RWPE1 (cell line): ENCODE measurements at regions of chr2 and their contacts with region 1.

Region 1: GRCh38 chr2:215311625-215312396 is at the start of gene ATIC:
- DNase-seq: peak; percentile 90
- H3K27ac ChIP-seq: peak within 1 kb of the TSS; percentile 79
- CTCF ChIP-seq: no peak

Region 2: GRCh38 chr2:215137807-215138206 is 174.0 kb before region 1 on chr2:
- CTCF ChIA-PET with region 1: no interaction called
- POLR2A ChIA-PET with region 1: interaction called, 10 read pairs
- DNase-seq: peak; percentile 92
- H3K27ac ChIP-seq: peak overlapping the region; percentile 70
- CTCF ChIP-seq: no peak

Region 3: DNA sequence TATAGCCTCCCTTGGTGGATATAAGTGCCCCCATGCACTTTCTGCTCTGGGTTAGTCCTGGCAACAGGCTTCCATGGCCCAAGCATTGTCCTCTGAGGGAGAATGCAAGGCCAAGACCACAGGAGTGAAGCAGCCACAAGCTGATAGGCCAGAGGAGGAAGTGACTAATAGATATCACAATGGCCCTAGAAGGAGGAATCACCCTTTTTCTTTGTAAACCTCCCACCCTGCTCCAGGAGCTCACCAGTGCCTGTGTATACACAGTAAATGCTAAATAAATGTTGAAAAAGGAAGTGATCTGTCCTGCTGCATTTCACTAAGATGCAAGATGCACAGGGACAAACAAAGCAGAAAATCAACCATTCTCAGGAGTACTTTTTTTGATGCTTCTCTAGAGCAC is 123.7 kb before region 1 on chr2:
- CTCF ChIA-PET with region 1: no interaction called
- POLR2A ChIA-PET with region 1: interaction called, 12 read pairs
- DNase-seq: no peak
- H3K27ac ChIP-seq: no peak overlapping the region
- CTCF ChIP-seq: no peak

Region 4: GRCh38 chr2:215418064-215418963 is 106.5 kb after region 1 on chr2:
- CTCF ChIA-PET with region 1: no interaction called
- POLR2A ChIA-PET with region 1: no interaction called
- DNase-seq: no peak
- H3K27ac ChIP-seq: no peak overlapping the region
- CTCF ChIP-seq: no peak